Activated naive CD4-positive, alpha-beta T cell treated with anti-CD3 and anti-CD28 coated beads, Interleukin-2, amount 10 ng/mL, durations not matched to agents 7 days and 5 days (primary cell): ENCODE measurements at regions of chr11 and their contacts with region 1.

Region 1: GRCh38 chr11:123083623-123084029 is 21.7 kb upstream of the HSPA8 start:
- DNase-seq: peak; percentile 75
- H3K4me3 Mint-ChIP-seq: peak overlapping the region; percentile 40
- H3K27ac Mint-ChIP-seq: peak overlapping the region; percentile 80
- H3K4me1 Mint-ChIP-seq: peaks cover 70% of the 10 kb centered on the region
- H3K27me3 Mint-ChIP-seq: no peaks in the 10 kb centered on the region

Region 2: DNA sequence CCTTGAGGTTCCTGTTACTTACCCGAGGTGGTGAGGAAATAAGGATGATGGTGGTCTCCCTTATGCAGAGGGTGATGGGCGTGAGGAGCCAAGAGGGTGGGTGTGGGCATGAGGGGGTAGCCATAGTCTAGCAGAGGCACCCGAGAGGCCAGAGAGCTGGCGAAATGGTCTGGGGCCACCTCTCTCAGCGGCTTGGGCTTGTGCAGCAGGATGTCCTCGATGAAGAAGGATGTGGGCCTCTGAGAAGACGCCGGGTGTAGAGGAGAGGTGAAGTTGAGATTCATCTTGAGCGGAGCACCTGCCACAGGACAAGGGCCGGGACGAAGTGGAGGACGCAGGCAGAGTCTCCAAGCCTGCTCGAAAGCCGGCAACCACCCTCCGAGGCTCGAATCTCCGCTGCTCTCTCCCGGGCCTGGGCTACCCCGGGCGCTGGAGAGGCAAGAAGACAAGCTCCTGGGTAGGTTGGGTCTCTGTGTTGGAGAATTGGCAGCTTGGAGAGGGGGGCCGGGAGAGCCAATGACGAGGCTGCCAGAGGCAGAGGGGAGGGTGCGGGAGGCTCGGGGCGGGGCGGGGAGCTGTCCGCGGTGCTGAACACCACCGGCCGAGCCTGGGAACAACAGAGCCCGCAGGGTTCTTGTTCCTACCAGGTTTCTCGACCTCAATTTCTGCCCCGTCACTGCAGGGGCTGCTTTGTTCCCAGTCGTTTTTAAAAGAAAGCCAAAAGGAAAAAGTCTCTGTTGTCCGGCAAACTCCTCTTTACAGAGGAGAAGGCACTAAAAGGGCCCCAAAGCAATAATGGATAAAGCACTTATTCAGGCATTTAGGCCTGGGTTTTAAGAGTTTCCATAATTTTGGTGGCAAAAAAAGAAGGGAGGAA is 102.0 kb before region 1 on chr11 and contains the start of gene BSX:
- CTCF ChIA-PET with region 1: no interaction called
- DNase-seq: peak; percentile 77
- H3K4me3 Mint-ChIP-seq: no peak within 1 kb of the TSS
- H3K27ac Mint-ChIP-seq: peak within 1 kb of the TSS; percentile 25
- H3K4me1 Mint-ChIP-seq: peaks cover 27% of the 10 kb centered on the region
- H3K27me3 Mint-ChIP-seq: peaks cover 96% of the 10 kb centered on the region

Region 3: GRCh38 chr11:123069908-123070821 is 13.5 kb before region 1 on chr11:
- CTCF ChIA-PET with region 1: interaction called, 11 read pairs
- DNase-seq: peak; percentile 45
- H3K4me3 Mint-ChIP-seq: peak overlapping the region; percentile 76
- H3K27ac Mint-ChIP-seq: peak overlapping the region; percentile 100
- H3K4me1 Mint-ChIP-seq: peaks cover 66% of the 10 kb centered on the region
- H3K27me3 Mint-ChIP-seq: no peaks in the 10 kb centered on the region